Calu3 (cell line): ENCODE measurements at regions of chr3 and their contacts with region 1.

Region 1: GRCh38 chr3:189270248-189270832 is 98.6 kb downstream of the TPRG1 start:
- DNase-seq: peak; percentile 84
- H3K4me3 Mint-ChIP-seq: no peak overlapping the region
- H3K27ac Mint-ChIP-seq: no peak overlapping the region
- H3K4me1 Mint-ChIP-seq: peaks cover 45% of the 10 kb centered on the region
- H3K27me3 Mint-ChIP-seq: no peaks in the 10 kb centered on the region
- CTCF ChIP-seq: peak; percentile 86

Region 2: GRCh38 chr3:189324538-189325138 is 54.3 kb after region 1 on chr3:
- CTCF ChIA-PET with region 1: interaction called, 13 read pairs
- intact Hi-C with region 1: loop called (anchors 1 kb)
- DNase-seq: peak; percentile 93
- H3K4me3 Mint-ChIP-seq: peak overlapping the region; percentile 22
- H3K27ac Mint-ChIP-seq: peak overlapping the region; percentile 75
- H3K4me1 Mint-ChIP-seq: peaks cover 54% of the 10 kb centered on the region
- H3K27me3 Mint-ChIP-seq: peaks cover 16% of the 10 kb centered on the region
- CTCF ChIP-seq: no peak

Region 3: GRCh38 chr3:189394599-189395121 is 124.3 kb after region 1 on chr3:
- CTCF ChIA-PET with region 1: interaction called, 6 read pairs
- intact Hi-C with region 1: loop called (anchors 5 kb)
- DNase-seq: no peak
- H3K4me3 Mint-ChIP-seq: no peak overlapping the region
- H3K27ac Mint-ChIP-seq: peak overlapping the region; percentile 47
- H3K4me1 Mint-ChIP-seq: peaks cover 52% of the 10 kb centered on the region
- H3K27me3 Mint-ChIP-seq: no peaks in the 10 kb centered on the region
- CTCF ChIP-seq: no peak

Region 4: DNA sequence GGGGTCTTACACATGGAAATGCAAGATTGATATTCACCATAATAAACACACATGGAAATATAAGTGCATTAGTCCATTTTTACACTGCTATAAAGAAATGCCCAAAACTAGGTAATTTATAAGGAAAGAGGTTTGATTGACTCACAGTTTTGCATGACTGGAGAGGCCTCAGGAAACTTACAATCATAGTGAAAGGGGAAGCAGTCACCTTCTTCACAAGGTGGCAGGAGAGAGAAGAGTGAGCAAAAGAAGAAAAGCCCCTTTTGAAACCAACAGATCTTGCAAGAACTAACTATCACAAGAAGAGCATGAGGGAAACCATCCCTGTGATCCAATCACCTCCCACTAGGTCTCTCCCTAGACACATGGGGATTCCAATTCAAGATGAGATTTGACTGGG is 249.1 kb after region 1 on chr3:
- CTCF ChIA-PET with region 1: no interaction called
- intact Hi-C with region 1: no loop called
- DNase-seq: no peak
- H3K4me3 Mint-ChIP-seq: no peak overlapping the region
- H3K27ac Mint-ChIP-seq: no peak overlapping the region
- H3K4me1 Mint-ChIP-seq: peaks cover under 1% of the 10 kb centered on the region
- H3K27me3 Mint-ChIP-seq: no peaks in the 10 kb centered on the region
- CTCF ChIP-seq: no peak

Region 5: GRCh38 chr3:189570916-189571315 is 300.6 kb after region 1 on chr3:
- CTCF ChIA-PET with region 1: interaction called, 3 read pairs
- intact Hi-C with region 1: loop called (anchors 5 kb)
- DNase-seq: no peak
- H3K4me3 Mint-ChIP-seq: no peak overlapping the region
- H3K27ac Mint-ChIP-seq: no peak overlapping the region
- H3K4me1 Mint-ChIP-seq: peaks cover 15% of the 10 kb centered on the region
- H3K27me3 Mint-ChIP-seq: no peaks in the 10 kb centered on the region
- CTCF ChIP-seq: no peak

Region 6: GRCh38 chr3:189786479-189787064 is 516.2 kb after region 1 on chr3:
- CTCF ChIA-PET with region 1: interaction called, 5 read pairs
- intact Hi-C with region 1: loop called (anchors 5 kb)
- DNase-seq: no peak
- H3K4me3 Mint-ChIP-seq: no peak overlapping the region
- H3K27ac Mint-ChIP-seq: no peak overlapping the region
- H3K4me1 Mint-ChIP-seq: peaks cover 24% of the 10 kb centered on the region
- H3K27me3 Mint-ChIP-seq: no peaks in the 10 kb centered on the region
- CTCF ChIP-seq: peak; percentile 47